Heart left ventricle (tissue), 16 donors: ENCODE measurements at regions of chr2 and their contacts with region 1.

Region 1: GRCh38 chr2:55050133-55050994 is at the start of gene RTN4:
- DNase-seq: peak; percentile 98 to 99 (median 99)
- ATAC-seq: peak; percentile 92 to 97 (median 94)
- H3K4me3 ChIP-seq: peak within 1 kb of the TSS; percentile 67 to 95 (median 88)
- H3K27ac ChIP-seq: peak within 1 kb of the TSS; percentile 91 to 100 (median 98)
- H3K4me1 ChIP-seq: peaks cover 0 to 51% (median 34%) of the 10 kb centered on the region in 12 donors
- H3K27me3 ChIP-seq: no peaks in the 10 kb centered on the region
- CTCF ChIP-seq: peak in 2 of 12 donors; percentile 5 to 10
- POLR2A ChIP-seq: peak; percentile 77 to 97
- total RNA-seq, gene RTN4: 46.1 to 250 (median 95.5) TPM

Region 2: GRCh38 chr2:54899576-54900200 is 150.7 kb before region 1 on chr2:
- intact Hi-C with region 1: loop called in 1 of 10 experiments (anchors 10 kb)
- DNase-seq: no peak
- ATAC-seq: peak in 3 of 4 donors; percentile 47 to 78 (median 58)
- H3K4me3 ChIP-seq: no peak overlapping the region
- H3K27ac ChIP-seq: no peak overlapping the region
- H3K4me1 ChIP-seq: peaks cover 0 to 12% (median 0%) of the 10 kb centered on the region in 12 donors
- H3K27me3 ChIP-seq: no peaks in the 10 kb centered on the region
- CTCF ChIP-seq: peak; percentile 22 to 72 (median 60)
- POLR2A ChIP-seq: no peak

Region 3: DNA sequence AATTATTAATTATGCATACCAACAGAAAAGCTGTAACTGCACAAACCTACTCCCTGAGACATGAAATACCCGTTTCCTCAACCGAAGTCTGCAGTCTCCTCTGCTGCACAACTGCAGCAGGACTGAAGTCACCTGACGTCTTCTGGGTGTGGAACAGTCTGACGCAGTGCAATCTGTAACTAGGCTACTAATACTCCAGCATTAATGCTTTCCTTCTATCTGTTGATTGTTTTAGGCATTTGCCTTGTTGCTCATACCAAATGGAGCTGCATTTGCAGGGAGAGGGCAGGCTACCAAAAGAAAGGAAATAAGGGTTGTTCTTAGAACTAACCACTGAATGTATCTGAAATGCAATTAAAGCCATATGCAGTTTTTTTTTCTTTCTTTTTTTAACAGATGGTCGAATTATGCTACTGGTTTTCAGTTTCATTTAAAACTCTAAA is 40.2 kb before region 1 on chr2:
- intact Hi-C with region 1: loop called in 5 of 10 experiments (anchors 5 kb)
- DNase-seq: peak in 2 of 5 donors; percentile 32 to 37
- ATAC-seq: peak; percentile 66 to 90 (median 84)
- H3K4me3 ChIP-seq: peak overlapping the region in 10 of 12 donors; percentile 1 to 56 (median 34)
- H3K27ac ChIP-seq: peak overlapping the region in 3 of 12 donors; percentile 18 to 66 (median 20)
- H3K4me1 ChIP-seq: peaks cover 0 to 90% (median 56%) of the 10 kb centered on the region in 12 donors
- H3K27me3 ChIP-seq: no peaks in the 10 kb centered on the region
- CTCF ChIP-seq: no peak
- POLR2A ChIP-seq: no peak

Region 4: GRCh38 chr2:55099878-55100820 is 49.8 kb after region 1 on chr2:
- intact Hi-C with region 1: loop called in 1 of 10 experiments (anchors 5 kb)
- DNase-seq: no peak
- ATAC-seq: peak; percentile 30 to 69 (median 63)
- H3K4me3 ChIP-seq: peak overlapping the region in 2 of 12 donors; percentile 11 to 13
- H3K27ac ChIP-seq: peak overlapping the region; percentile 45 to 90 (median 71)
- H3K4me1 ChIP-seq: peaks cover 0 to 62% (median 43%) of the 10 kb centered on the region in 12 donors
- H3K27me3 ChIP-seq: no peaks in the 10 kb centered on the region
- CTCF ChIP-seq: no peak
- POLR2A ChIP-seq: no peak

Region 5: GRCh38 chr2:55168221-55169154 is 118.1 kb after region 1 on chr2:
- intact Hi-C with region 1: loop called in 7 of 10 experiments (anchors 5 to 10 kb)
- DNase-seq: peak in 3 of 5 donors; percentile 42 to 43 (median 42)
- ATAC-seq: peak; percentile 40 to 80 (median 74)
- H3K4me3 ChIP-seq: no peak overlapping the region
- H3K27ac ChIP-seq: peak overlapping the region in 5 of 12 donors; percentile 7 to 62 (median 9)
- H3K4me1 ChIP-seq: peaks cover 0 to 32% (median 9%) of the 10 kb centered on the region in 12 donors
- H3K27me3 ChIP-seq: no peaks in the 10 kb centered on the region
- CTCF ChIP-seq: peak; percentile 48 to 85 (median 73)
- POLR2A ChIP-seq: no peak